Lower lobe of right lung (tissue), 2 donors: ENCODE measurements at regions of chr9 and their contacts with region 1.

Region 1: DNA sequence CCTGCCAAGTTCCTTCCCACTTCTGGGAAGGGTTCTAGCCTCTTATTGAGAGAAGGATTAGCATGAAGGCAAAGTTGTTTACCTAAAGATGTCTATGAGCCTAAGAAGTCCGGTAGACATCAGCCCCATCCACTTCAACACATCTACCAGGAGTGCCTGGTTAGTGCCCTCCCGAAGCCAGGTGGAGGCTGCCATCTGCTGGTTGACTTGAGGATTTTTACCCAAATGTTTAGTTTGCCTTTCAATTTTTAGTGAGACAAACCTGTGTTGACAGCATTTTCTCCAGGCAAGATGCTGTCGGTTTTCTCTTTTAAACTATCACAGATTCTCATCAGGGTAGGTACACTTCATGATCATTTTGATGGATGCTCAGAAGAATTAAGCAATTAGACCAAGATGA is 83.6 kb upstream of the TNFSF8 start:
- DNase-seq: peak; percentile 69
- ATAC-seq: peak; percentile 82 to 86
- H3K4me3 ChIP-seq: no peak overlapping the region
- H3K27ac ChIP-seq: no peak overlapping the region
- H3K4me1 ChIP-seq: no peaks in the 10 kb centered on the region
- H3K27me3 ChIP-seq: no peaks in the 10 kb centered on the region
- CTCF ChIP-seq: peak; percentile 81

Region 2: DNA sequence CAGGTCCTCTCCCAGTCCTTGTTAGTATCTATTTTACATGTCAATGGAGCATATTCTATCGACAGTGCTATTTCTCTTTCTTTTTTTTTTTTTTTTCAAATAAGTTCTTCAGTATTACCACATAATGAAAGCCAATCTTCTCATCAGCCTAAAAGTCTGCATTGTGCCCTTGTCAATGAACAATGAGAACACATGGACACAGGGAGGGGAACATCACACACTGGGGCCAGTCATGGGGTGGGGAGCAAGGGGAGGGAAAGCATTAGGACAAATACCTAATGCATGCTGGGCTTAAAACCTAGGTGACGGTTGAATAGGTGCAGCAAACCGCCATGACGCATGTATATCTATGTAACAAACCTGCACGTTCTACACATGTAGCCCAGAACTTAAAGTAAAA is 284.3 kb before region 1 on chr9:
- intact Hi-C with region 1: loop called (anchors 5 kb)
- DNase-seq: no peak
- ATAC-seq: no peak
- H3K4me3 ChIP-seq: no peak overlapping the region
- H3K27ac ChIP-seq: no peak overlapping the region
- H3K4me1 ChIP-seq: no peaks in the 10 kb centered on the region
- H3K27me3 ChIP-seq: no peaks in the 10 kb centered on the region
- CTCF ChIP-seq: no peak

Region 3: DNA sequence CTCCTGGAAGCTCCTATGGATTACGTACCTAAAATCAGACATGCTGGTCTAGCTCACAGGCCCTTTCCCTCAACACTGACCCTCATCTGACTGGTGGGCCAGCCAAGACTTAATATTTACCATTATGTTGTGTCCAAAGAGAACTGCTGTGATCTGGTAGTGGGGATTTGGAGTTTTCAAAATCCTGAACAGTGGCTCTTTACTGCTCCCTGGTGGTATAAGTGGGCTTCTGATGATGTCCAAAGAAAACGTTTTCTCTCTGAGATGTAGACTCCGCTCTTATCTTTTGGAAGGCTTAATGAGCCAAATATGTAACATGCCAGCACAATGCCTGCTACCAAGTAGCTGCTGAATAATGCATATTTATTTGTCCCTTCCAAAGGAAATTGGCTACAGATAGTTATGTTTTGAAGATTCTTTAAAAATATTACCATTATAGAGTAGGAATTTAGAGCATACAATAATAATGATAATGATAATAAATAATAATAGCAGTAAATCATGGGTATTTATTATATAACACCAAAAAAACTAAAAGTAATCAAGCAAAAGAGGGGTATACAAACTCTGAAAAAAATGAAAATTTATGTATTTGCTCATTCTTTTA is 510.6 kb after region 1 on chr9:
- intact Hi-C with region 1: loop called (anchors 10 kb)
- DNase-seq: no peak
- ATAC-seq: peak; percentile 71 to 76
- H3K4me3 ChIP-seq: no peak overlapping the region
- H3K27ac ChIP-seq: no peak overlapping the region
- H3K4me1 ChIP-seq: no peaks in the 10 kb centered on the region
- H3K27me3 ChIP-seq: no peaks in the 10 kb centered on the region
- CTCF ChIP-seq: peak; percentile 67